ENCODE measurements at regions of chrX and their contacts with region 1.

Region 1: GRCh38 chrX:107742700-107743191 is 32.8 kb downstream of the TSC22D3 start:
- DNase-seq: no peak
- ATAC-seq: no peak
- H3K4me3 Mint-ChIP-seq: peak overlapping the region; percentile 66
- H3K27ac Mint-ChIP-seq: peak overlapping the region; percentile 96
- H3K4me1 Mint-ChIP-seq: peaks cover 42% of the 10 kb centered on the region
- H3K27me3 Mint-ChIP-seq: no peaks in the 10 kb centered on the region

Region 2: GRCh38 chrX:107710617-107711391 is 31.9 kb before region 1 on chrX:
- CTCF ChIA-PET with region 1: no interaction called
- POLR2A ChIA-PET with region 1: no interaction called
- intact Hi-C with region 1: loop called in 1 of 2 experiments (anchors 1 kb)
- DNase-seq: peak; percentile 60
- ATAC-seq: peak; percentile 81
- H3K4me3 Mint-ChIP-seq: peak overlapping the region; percentile 34
- H3K27ac Mint-ChIP-seq: peak overlapping the region; percentile 99
- H3K4me1 Mint-ChIP-seq: peaks cover 53% of the 10 kb centered on the region
- H3K27me3 Mint-ChIP-seq: no peaks in the 10 kb centered on the region

Region 3: DNA sequence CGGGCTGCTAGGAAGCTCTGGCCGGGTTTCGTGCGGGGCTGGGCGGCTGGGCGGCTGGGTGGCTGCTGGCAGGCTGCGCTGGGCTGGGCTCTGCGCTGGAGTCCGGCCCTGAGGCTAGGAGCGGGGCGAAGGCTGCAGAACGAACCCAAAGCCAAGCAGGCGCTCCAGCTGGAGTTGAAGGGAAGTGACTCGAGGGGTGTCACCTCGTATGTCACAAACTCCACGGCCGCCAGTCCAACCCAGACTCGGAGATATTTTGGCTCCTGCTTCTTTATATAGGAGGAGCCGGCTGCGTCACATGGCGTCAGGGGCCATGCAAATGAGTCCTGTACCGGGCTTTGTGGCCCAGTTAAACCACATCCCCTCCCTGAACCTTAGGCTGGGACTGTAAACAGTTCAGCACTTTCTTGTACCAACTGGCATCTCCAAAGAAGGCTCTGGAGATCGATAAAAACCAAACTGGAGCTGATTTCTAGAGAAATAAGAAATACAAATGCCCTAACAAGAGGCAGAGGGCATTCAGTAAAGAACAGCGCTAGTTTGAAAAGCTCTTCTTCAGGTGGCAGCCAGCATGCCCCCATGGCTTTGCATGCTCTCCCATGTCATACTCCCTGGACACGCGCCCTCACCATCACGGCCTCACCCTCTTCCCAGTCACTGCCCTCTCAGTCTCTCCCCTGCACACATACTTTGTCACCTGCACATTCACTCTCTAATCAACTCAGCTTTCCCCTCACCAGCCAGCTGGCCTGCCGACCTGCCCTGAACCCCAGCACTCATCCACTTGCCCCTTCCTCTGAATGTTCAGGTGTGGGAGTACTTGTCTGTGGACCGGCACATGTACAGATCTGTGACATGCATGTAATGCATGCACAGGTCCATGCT is 25.7 kb before region 1 on chrX:
- CTCF ChIA-PET with region 1: interaction called, 3 read pairs
- POLR2A ChIA-PET with region 1: no interaction called
- intact Hi-C with region 1: loop called in 1 of 2 experiments (anchors 1 kb)
- DNase-seq: peak; percentile 88
- ATAC-seq: peak; percentile 88
- H3K4me3 Mint-ChIP-seq: peak overlapping the region; percentile 90
- H3K27ac Mint-ChIP-seq: peak overlapping the region; percentile 92
- H3K4me1 Mint-ChIP-seq: peaks cover 43% of the 10 kb centered on the region
- H3K27me3 Mint-ChIP-seq: no peaks in the 10 kb centered on the region

Region 4: GRCh38 chrX:107787827-107788226 is 45.1 kb after region 1 on chrX:
- CTCF ChIA-PET with region 1: no interaction called
- POLR2A ChIA-PET with region 1: no interaction called
- intact Hi-C with region 1: no loop called
- DNase-seq: no peak
- ATAC-seq: no peak
- H3K4me3 Mint-ChIP-seq: no peak overlapping the region
- H3K27ac Mint-ChIP-seq: no peak overlapping the region
- H3K4me1 Mint-ChIP-seq: no peaks in the 10 kb centered on the region
- H3K27me3 Mint-ChIP-seq: peaks cover 1% of the 10 kb centered on the region

Measured in activated CD4-positive, alpha-beta T cell treated with anti-CD3 and anti-CD28 coated beads for 36 hours (primary cell).